ENCODE measurements at regions of chr1 and their contacts with region 1.

Region 1: GRCh38 chr1:206612129-206612876 is at the start of gene EIF2D:
- DNase-seq: peak; percentile 94
- H3K4me3 Mint-ChIP-seq: peak within 1 kb of the TSS; percentile 81
- H3K27ac Mint-ChIP-seq: peak within 1 kb of the TSS; percentile 86
- H3K4me1 Mint-ChIP-seq: peaks cover 30% of the 10 kb centered on the region
- H3K27me3 Mint-ChIP-seq: peaks cover 18% of the 10 kb centered on the region

Region 2: GRCh38 chr1:206658264-206658980 is 46.1 kb after region 1 on chr1:
- CTCF ChIA-PET with region 1: interaction called, 100 read pairs
- DNase-seq: peak; percentile 70
- H3K4me3 Mint-ChIP-seq: no peak overlapping the region
- H3K27ac Mint-ChIP-seq: no peak overlapping the region
- H3K4me1 Mint-ChIP-seq: peaks cover 12% of the 10 kb centered on the region
- H3K27me3 Mint-ChIP-seq: peaks cover 68% of the 10 kb centered on the region

Region 3: GRCh38 chr1:207097871-207098324 is 485.6 kb after region 1 on chr1:
- CTCF ChIA-PET with region 1: no interaction called
- DNase-seq: peak; percentile 29
- H3K4me3 Mint-ChIP-seq: no peak overlapping the region
- H3K27ac Mint-ChIP-seq: peak overlapping the region; percentile 64
- H3K4me1 Mint-ChIP-seq: peaks cover 12% of the 10 kb centered on the region
- H3K27me3 Mint-ChIP-seq: no peaks in the 10 kb centered on the region

Measured in activated naive CD4-positive, alpha-beta T cell treated with anti-CD3 and anti-CD28 coated beads, Interleukin-2, amount 10 ng/mL, durations not matched to agents 7 days and 5 days (primary cell).